ENCODE measurements at regions of chr14 and their contacts with region 1.

Region 1: GRCh38 chr14:30681752-30682355 is 59.7 kb downstream of the SCFD1 start:
- DNase-seq: no peak
- H3K4me3 ChIP-seq: no peak overlapping the region
- H3K27ac ChIP-seq: no peak overlapping the region
- H3K4me1 ChIP-seq: no peaks in the 10 kb centered on the region
- H3K27me3 ChIP-seq: no peaks in the 10 kb centered on the region
- CTCF ChIP-seq: peak; percentile 55

Region 2: GRCh38 chr14:30725763-30726162 is 43.9 kb after region 1 on chr14:
- CTCF ChIA-PET with region 1: interaction called, 11 read pairs
- POLR2A ChIA-PET with region 1: no interaction called
- intact Hi-C with region 1: no loop called
- DNase-seq: no peak
- H3K4me3 ChIP-seq: no peak overlapping the region
- H3K27ac ChIP-seq: no peak overlapping the region
- H3K4me1 ChIP-seq: no peaks in the 10 kb centered on the region
- H3K27me3 ChIP-seq: no peaks in the 10 kb centered on the region
- CTCF ChIP-seq: no peak

Measured in PC-9 (cell line).